ENCODE measurements at regions of chr11 and their contacts with region 1.

Region 1: DNA sequence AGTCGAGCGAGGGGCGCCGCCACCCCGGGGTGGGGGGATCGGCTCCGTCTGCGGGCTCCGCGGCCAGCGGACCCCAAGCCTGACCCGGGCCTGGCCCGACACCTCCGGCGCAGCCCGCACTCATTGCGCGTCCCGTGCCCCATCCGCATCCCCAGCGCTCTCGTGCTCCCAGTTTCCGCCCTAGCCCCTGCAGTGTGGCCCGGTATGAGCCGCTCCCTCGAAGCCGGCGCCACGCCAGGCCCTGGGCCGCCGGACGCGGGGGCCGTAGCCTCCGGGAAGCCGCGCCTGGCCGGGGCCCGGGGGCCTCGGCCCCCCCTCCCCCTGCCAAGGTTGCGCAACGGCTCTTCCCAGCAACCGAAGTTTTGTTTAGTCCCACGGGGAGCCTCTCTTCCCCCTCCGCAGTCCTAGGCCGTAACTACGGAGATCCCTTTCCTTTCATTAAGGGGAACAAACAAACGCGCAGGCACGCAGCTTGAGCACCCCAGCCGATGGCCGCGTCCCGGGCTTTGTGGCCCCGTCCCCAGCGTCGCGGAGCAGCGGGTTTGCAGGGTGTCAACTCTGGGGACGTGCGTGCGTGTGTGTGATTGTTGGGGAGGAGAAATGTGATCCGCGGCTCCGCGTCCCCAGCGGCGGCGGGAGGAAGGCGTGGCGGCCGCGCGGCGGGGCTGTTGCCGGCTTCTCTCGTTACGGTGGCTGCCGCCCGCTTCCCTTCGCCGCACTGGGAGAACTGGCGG is 883 bp downstream of the HIPK3 start:
- DNase-seq: peak; percentile 84
- H3K4me3 Mint-ChIP-seq: peak overlapping the region; percentile 94
- H3K27ac Mint-ChIP-seq: peak overlapping the region; percentile 95
- H3K4me1 Mint-ChIP-seq: peaks cover 42% of the 10 kb centered on the region
- H3K27me3 Mint-ChIP-seq: no peaks in the 10 kb centered on the region

Region 2: GRCh38 chr11:32893343-32894148 is 364.5 kb before region 1 on chr11:
- CTCF ChIA-PET with region 1: no interaction called
- POLR2A ChIA-PET with region 1: no interaction called
- intact Hi-C with region 1: loop called (anchors 2 kb)
- DNase-seq: peak; percentile 68
- H3K4me3 Mint-ChIP-seq: peak overlapping the region; percentile 97
- H3K27ac Mint-ChIP-seq: peak overlapping the region; percentile 90
- H3K4me1 Mint-ChIP-seq: peaks cover 32% of the 10 kb centered on the region
- H3K27me3 Mint-ChIP-seq: no peaks in the 10 kb centered on the region

Region 3: GRCh38 chr11:33015621-33016551 is 242.2 kb before region 1 on chr11 and contains the start of gene DEPDC7:
- CTCF ChIA-PET with region 1: no interaction called
- POLR2A ChIA-PET with region 1: no interaction called
- intact Hi-C with region 1: loop called (anchors 5 kb)
- DNase-seq: peak; percentile 83
- H3K4me3 Mint-ChIP-seq: peak within 1 kb of the TSS; percentile 75
- H3K27ac Mint-ChIP-seq: no peak within 1 kb of the TSS
- H3K4me1 Mint-ChIP-seq: peaks cover 33% of the 10 kb centered on the region
- H3K27me3 Mint-ChIP-seq: peaks cover 29% of the 10 kb centered on the region
- total RNA-seq, gene DEPDC7: 0.86 to 0.90 TPM

Region 4: DNA sequence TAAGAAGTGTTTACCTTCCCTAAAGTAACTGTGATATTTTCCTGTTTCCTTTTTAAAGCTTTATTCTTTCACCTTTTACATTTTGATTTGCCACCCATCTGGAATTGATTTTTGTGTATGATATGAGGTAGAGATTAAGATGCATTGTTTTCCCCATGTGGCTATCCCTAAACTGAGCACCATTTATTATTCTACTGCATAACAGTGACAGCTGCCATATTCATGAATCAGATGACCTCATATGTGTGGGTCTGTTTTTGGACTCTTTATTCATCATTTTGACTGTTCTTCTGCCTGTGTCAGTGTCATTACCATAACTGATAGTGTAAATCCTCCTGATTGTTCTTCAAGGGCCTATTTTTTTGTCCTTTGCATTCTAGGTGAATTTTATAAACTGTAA is 49.9 kb after region 1 on chr11:
- CTCF ChIA-PET with region 1: no interaction called
- POLR2A ChIA-PET with region 1: no interaction called
- intact Hi-C with region 1: loop called (anchors 5 kb)
- DNase-seq: no peak
- H3K4me3 Mint-ChIP-seq: no peak overlapping the region
- H3K27ac Mint-ChIP-seq: peak overlapping the region; percentile 36
- H3K4me1 Mint-ChIP-seq: peaks cover 32% of the 10 kb centered on the region
- H3K27me3 Mint-ChIP-seq: no peaks in the 10 kb centered on the region

Region 5: GRCh38 chr11:33700425-33701271 is 442.6 kb after region 1 on chr11 and contains the start of gene C11orf91:
- CTCF ChIA-PET with region 1: no interaction called
- POLR2A ChIA-PET with region 1: no interaction called
- intact Hi-C with region 1: loop called (anchors 10 kb)
- DNase-seq: peak; percentile 96
- H3K4me3 Mint-ChIP-seq: peak within 1 kb of the TSS; percentile 83
- H3K27ac Mint-ChIP-seq: peak within 1 kb of the TSS; percentile 39
- H3K4me1 Mint-ChIP-seq: peaks cover 11% of the 10 kb centered on the region
- H3K27me3 Mint-ChIP-seq: peaks cover 14% of the 10 kb centered on the region
- total RNA-seq, gene C11orf91: not detected

Region 6: DNA sequence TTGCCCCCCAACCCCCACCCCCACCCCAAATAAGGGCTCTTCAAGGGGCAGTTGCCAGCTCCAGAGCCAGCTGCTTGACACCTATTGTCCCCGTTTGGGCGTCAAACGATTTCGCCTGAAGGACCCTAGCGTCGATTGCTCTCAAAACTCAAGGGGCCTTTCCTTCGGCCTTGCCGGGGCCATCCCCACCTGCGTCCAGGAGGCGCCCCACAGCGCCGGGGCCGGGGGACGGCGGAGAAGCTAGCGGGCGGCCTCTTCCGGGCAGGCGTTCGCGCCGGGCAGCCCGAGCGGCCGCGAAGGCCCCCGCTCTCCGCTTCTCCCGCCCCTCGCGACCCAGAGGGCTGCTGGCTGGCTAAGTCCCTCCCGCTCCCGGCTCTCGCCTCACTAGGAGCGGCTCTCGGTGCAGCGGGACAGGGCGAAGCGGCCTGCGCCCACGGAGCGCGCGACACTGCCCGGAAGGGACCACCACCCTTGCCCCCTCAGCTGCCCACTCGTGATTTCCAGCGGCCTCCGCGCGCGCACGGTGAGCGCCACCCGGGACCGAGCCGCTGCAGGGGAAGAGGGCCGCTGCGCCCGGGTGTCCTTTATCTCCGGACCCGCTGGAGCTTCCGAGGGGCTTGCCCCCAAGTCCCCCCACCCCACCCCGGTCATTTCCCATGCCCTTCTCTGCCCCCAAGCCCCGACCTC is 793.4 kb after region 1 on chr11 and contains the start of gene CAPRIN1:
- CTCF ChIA-PET with region 1: no interaction called
- POLR2A ChIA-PET with region 1: no interaction called
- intact Hi-C with region 1: loop called (anchors 2 kb)
- DNase-seq: peak; percentile 88
- H3K4me3 Mint-ChIP-seq: peak within 1 kb of the TSS; percentile 92
- H3K27ac Mint-ChIP-seq: peak within 1 kb of the TSS; percentile 96
- H3K4me1 Mint-ChIP-seq: peaks cover 18% of the 10 kb centered on the region
- H3K27me3 Mint-ChIP-seq: no peaks in the 10 kb centered on the region
- total RNA-seq, gene CAPRIN1: 261 to 264 TPM

Measured in activated CD4-positive, alpha-beta memory T cell treated with anti-CD3 and anti-CD28 coated beads for 36 hours (primary cell).